ENCODE measurements at regions of chr6 and their contacts with region 1.

Region 1: DNA sequence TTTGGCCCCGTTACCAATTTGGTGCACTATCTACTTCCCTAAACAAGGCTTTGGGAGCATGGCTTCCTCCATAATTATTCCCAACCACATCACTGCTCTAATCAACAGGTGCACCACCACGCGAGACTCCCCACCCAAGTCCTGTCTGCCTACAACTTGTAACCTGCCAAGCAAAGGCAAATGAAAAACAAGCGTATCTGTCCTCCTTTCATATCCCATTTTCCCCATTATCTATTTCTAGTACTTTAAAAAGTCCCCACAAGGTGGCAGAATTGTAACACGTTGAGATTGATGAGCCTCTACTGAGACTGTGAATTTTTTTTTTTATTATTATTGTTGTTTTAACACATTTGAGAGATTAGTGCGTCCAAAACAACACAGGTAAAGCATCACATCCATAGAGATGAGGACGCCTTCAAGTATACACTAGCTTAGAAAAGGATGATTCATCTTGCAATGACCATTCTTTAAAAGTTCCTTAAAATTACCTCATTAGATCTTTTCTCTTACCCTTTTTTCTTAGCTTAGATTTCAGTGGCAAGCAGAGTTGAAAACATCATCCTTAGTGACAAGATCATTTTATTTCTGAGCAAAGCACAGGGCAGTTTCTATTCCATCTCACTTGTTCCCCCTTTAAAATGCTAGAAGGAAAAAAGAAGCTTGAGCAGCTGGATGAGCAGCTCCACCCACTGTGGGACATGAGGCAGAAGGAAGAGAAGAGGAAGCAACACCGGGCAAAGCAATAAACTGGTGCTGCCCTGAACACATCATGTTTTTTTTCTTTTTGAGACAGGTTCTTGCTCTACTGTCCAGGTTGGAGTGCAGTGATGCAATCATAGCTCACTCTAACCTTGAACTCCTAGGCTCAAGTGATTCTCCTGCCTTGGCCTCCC is 210.8 kb downstream of the ARHGAP18 start:
- DNase-seq: no peak
- H3K4me3 ChIP-seq: no peak overlapping the region
- H3K27ac ChIP-seq: no peak overlapping the region
- H3K4me1 ChIP-seq: peaks cover 0 to 15% (median 4%) of the 10 kb centered on the region in 4 donors
- H3K27me3 ChIP-seq: no peaks in the 10 kb centered on the region
- CTCF ChIP-seq: peak; percentile 10 to 64 (median 46)
- EP300 ChIP-seq: no peak
- POLR2A ChIP-seq: no peak

Region 2: DNA sequence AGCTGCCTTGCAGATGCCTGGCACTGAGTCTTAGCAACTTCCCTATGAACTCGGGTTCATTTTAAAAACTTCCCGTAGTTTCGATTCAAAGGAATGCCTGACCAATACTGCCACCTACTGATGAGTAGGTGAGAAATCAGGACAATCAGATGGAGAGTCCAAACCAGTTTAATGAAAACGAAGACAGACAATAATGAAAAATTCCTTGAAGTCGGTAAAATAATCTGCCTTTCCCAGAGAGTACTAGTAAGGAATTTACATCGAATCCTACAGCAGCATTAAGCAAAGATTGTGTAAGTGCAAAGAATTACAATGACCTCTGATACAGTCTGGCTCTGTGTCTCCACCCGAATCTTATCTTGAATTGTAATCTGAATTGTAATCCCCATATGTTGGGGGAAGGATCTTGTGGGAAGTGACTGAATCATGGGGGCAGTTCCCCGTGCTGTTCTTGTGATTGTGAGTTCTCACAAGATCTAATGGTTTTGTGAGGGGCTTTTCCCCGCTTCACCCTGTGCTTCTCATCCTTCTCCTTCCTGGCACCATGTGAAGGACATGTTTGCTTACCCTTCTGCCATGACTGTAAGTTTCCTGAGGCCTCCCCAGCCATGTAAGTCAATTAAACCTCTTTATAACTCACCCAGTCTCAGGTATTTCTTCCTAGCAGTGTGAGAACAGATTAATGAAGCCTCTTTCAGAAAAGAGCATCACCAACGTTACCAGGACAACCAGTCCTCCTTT is 76.4 kb after region 1 on chr6:
- intact Hi-C with region 1: loop called (anchors 1 kb)
- DNase-seq: no peak
- H3K4me3 ChIP-seq: peak overlapping the region in 3 of 4 donors; percentile 21 to 23 (median 22)
- H3K27ac ChIP-seq: no peak overlapping the region
- H3K4me1 ChIP-seq: peaks cover 0 to 3% (median 0%) of the 10 kb centered on the region in 4 donors
- H3K27me3 ChIP-seq: no peaks in the 10 kb centered on the region
- CTCF ChIP-seq: peak; percentile 24 to 66 (median 44)
- EP300 ChIP-seq: no peak
- POLR2A ChIP-seq: no peak

Region 3: DNA sequence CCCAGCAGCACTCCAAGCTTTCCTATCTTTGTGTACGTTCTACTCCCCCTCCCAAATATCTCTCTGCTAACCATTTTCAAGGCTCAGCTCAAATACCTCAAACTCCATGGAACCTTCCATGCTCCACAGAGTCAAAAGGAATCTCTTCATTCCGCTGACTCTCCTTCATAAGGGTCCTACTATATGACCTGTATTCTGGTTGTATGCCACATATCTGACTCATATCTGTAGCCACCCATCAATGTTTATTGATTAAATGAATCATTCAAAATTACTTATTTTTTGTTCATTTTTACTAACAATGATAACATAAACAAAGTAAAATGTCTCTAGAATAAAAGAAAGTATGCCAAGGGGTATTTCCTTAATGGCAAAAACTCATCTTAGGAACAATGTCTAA is 87.6 kb after region 1 on chr6:
- intact Hi-C with region 1: no loop called
- DNase-seq: no peak
- H3K4me3 ChIP-seq: no peak overlapping the region
- H3K27ac ChIP-seq: no peak overlapping the region
- H3K4me1 ChIP-seq: peaks cover 7 to 18% (median 10%) of the 10 kb centered on the region in 4 donors
- H3K27me3 ChIP-seq: no peaks in the 10 kb centered on the region
- CTCF ChIP-seq: no peak
- EP300 ChIP-seq: no peak
- POLR2A ChIP-seq: no peak

Region 4: DNA sequence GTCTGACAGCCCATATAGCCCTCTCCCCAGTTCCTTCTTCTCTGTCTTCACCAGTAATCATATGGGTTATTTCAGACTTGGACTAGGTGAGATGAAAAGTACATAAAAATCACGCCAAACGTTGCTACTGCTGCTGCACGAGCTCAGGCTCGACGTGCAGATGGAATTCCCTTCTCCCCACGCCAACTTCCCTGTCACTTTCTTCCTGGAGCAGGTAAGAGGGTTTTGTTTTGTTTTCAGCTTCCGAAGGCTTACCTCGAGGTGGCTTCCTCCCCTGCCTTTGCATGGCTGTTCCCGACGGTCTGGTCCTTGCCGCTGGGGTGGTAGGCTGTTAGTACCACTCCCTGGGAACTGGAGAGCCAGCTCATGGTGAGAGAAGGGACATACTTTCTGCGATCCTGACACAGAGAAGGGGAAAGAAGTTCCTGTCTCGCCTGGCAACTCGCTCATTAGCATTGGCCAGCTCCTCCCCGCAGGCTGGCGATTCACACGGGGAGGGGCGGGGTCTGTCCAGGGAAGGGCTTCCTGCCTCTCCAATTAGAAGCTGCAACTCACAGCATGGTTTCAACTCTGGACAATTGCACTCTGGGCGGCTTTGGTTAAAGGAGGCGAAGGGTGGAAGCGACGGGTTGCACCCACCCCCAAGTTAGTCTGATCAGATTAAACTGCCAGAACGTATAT is 210.7 kb after region 1 on chr6 and contains the start of gene ARHGAP18:
- intact Hi-C with region 1: no loop called
- DNase-seq: peak; percentile 94
- H3K4me3 ChIP-seq: peak within 1 kb of the TSS; percentile 16 to 55 (median 52)
- H3K27ac ChIP-seq: peak within 1 kb of the TSS; percentile 62 to 80 (median 70)
- H3K4me1 ChIP-seq: peaks cover 0 to 26% (median 8%) of the 10 kb centered on the region in 4 donors
- H3K27me3 ChIP-seq: no peaks in the 10 kb centered on the region
- CTCF ChIP-seq: no peak
- EP300 ChIP-seq: no peak
- POLR2A ChIP-seq: peak; percentile 36 to 79
- total RNA-seq, gene ARHGAP18: 9.2 to 16.9 (median 10.0) TPM